ENCODE measurements at regions of chr19 and their contacts with region 1.

Region 1: DNA sequence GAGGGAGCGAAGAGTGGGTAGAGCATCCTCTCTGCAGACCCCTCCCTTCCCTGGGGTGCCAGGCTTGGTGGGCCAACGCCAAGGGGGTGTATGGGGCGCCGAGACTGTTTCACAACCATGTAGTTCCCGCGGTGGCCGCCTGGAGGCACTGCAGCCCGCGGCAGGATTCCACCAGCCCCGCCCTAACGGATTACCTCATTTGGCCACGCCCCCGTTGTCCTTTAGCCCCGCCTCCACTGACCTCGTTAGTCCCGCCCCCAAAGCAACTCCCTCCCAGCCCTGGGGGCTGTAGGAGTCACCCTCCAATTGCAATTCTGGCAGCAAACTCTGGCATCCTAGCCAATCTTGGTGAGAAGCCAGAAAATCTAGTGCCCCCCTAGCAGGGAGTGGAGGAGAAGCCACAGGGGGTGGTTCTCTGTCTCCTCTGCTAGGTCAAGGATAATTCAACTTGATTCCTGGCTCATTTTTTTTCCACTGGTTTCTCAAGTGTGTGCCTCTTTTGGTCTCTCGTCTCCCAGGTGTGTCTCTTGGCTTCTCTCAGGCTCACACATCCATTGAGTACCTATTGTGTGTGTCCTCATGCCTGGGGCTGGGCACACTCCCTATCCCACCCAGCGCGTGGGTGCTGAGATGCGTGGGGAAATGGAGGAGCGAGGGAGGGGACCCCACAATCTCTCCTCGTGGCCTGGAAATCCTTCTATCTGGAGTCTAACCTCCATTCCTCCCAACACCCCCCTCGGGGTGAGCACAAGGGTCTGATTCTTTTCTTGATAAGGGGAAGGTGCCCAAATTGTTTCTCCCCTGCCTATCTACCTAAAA is 2.0 kb downstream of the OLFM2 start:
- DNase-seq: no peak
- H3K4me3 ChIP-seq: peak overlapping the region; percentile 63
- CTCF ChIP-seq: peak; percentile 95

Region 2: GRCh38 chr19:10000171-10000826 is 66.0 kb after region 1 on chr19:
- CTCF ChIA-PET with region 1: interaction called, 114 read pairs
- POLR2A ChIA-PET with region 1: no interaction called
- DNase-seq: no peak
- H3K4me3 ChIP-seq: no peak overlapping the region
- CTCF ChIP-seq: peak; percentile 80

Region 3: DNA sequence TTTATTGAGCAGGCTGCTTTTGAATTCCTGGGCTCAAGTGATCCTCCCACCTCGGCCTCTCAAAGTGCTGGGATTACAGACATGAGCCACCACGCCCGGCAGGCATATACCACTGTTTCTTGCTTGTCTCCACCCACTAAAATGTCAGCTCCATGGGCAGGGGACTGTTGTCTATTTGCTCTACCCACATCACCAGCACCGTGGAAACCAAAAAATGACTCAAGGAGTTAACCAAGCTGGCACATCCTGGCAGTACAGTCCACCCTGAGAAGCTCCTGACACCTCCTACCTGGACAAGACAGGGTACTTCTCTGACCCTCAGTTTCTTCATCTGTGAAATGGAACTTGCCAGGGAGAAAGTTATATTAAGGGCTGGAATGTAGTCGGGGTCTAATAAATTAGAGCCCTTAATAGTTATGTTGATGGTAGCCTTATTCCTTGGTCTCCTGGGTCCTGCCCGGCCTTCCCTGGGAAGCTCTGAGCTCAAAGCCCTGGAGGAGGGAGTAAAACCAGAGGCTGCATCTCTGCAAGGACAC is 92.9 kb after region 1 on chr19:
- CTCF ChIA-PET with region 1: interaction called, 200 read pairs
- POLR2A ChIA-PET with region 1: interaction called, 3 read pairs
- DNase-seq: no peak
- H3K4me3 ChIP-seq: no peak overlapping the region
- CTCF ChIP-seq: no peak

Region 4: GRCh38 chr19:10095948-10096621 is 161.7 kb after region 1 on chr19:
- CTCF ChIA-PET with region 1: interaction called, 48 read pairs
- POLR2A ChIA-PET with region 1: no interaction called
- DNase-seq: no peak
- H3K4me3 ChIP-seq: peak overlapping the region; percentile 59
- CTCF ChIP-seq: no peak

Region 5: GRCh38 chr19:10112895-10113591 is 178.7 kb after region 1 on chr19:
- CTCF ChIA-PET with region 1: interaction called, 51 read pairs
- POLR2A ChIA-PET with region 1: no interaction called
- DNase-seq: no peak
- H3K4me3 ChIP-seq: no peak overlapping the region
- CTCF ChIP-seq: peak; percentile 81

Region 6: DNA sequence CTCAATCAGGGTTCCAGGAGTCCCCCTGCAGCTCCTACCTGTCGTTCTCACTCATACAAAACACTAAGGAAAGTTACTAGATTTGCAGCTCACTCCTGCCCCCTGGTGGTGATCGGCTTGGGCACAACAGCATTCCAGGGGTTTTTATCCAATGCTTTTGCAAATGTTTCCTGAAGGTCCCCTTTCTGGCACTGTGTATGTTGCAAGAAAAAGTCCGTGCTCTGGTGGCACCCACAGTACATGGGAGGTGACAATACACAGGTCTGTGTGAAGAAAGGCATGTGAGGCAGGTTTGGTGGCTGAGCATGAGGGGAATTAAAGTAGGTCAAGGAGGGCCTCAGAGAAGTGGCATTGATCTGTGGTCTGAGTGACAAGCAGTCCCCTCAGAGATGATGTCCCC is 454.6 kb after region 1 on chr19:
- CTCF ChIA-PET with region 1: interaction called, 15 read pairs
- POLR2A ChIA-PET with region 1: no interaction called
- DNase-seq: no peak
- H3K4me3 ChIP-seq: no peak overlapping the region
- CTCF ChIP-seq: peak; percentile 84